Ovary (tissue), 10 donors: ENCODE measurements at regions of chr15 and their contacts with region 1.

Region 1: GRCh38 chr15:75229191-75230015 is 27.7 kb downstream of the C15orf39 start:
- DNase-seq: peak in 1 of 5 donors; percentile 29
- H3K4me3 ChIP-seq: no peak overlapping the region
- H3K27ac ChIP-seq: no peak overlapping the region
- H3K4me1 ChIP-seq: no peaks in the 10 kb centered on the region
- H3K27me3 ChIP-seq: no peaks in the 10 kb centered on the region
- CTCF ChIP-seq: no peak
- EP300 ChIP-seq: no peak
- POLR2A ChIP-seq: no peak

Region 2: GRCh38 chr15:75036314-75036649 is 193.1 kb before region 1 on chr15:
- intact Hi-C with region 1: no loop called
- DNase-seq: no peak
- H3K4me3 ChIP-seq: no peak overlapping the region
- H3K27ac ChIP-seq: no peak overlapping the region
- H3K4me1 ChIP-seq: no peaks in the 10 kb centered on the region
- H3K27me3 ChIP-seq: no peaks in the 10 kb centered on the region
- CTCF ChIP-seq: no peak
- EP300 ChIP-seq: no peak
- POLR2A ChIP-seq: no peak

Region 3: DNA sequence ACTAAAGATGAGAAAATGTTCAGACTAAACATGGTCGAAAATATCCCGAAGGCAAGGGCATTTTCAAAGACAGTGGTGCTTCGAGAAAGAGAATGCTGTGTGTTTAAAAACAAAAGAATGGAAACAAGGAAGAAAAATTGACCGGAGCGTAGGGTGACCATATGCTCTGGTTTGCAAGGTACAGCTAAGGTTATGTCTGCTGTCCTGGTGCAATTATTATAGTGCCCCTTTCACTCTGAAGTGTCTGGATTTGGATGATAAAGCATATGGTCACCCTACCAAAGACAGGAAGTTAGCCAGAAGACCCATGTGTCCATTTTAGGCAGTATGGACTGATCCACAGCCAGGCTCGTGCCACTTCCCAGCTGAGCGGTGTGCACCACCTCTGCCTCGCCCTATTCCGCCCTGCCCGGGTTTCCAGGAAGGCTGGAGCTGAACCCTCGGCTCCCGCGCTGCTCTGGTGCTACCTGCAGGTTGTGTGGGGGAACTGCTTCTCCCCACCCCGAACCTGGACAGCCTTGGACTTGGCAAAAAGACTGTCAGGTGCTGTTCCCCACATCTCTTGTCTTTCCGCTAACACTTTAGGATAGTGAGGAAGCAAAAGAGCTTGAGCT is 78.5 kb after region 1 on chr15:
- intact Hi-C with region 1: loop called in 1 of 4 experiments (anchors 10 kb)
- DNase-seq: peak in 3 of 5 donors; percentile 26 to 64 (median 37)
- H3K4me3 ChIP-seq: no peak overlapping the region
- H3K27ac ChIP-seq: no peak overlapping the region
- H3K4me1 ChIP-seq: no peaks in the 10 kb centered on the region
- H3K27me3 ChIP-seq: no peaks in the 10 kb centered on the region
- CTCF ChIP-seq: no peak
- EP300 ChIP-seq: no peak
- POLR2A ChIP-seq: no peak

Region 4: GRCh38 chr15:75327005-75327404 is 97.6 kb after region 1 on chr15:
- intact Hi-C with region 1: loop called in 1 of 4 experiments (anchors 10 kb)
- DNase-seq: no peak
- H3K4me3 ChIP-seq: no peak overlapping the region
- H3K27ac ChIP-seq: no peak overlapping the region
- H3K4me1 ChIP-seq: no peaks in the 10 kb centered on the region
- H3K27me3 ChIP-seq: no peaks in the 10 kb centered on the region
- CTCF ChIP-seq: no peak
- EP300 ChIP-seq: no peak
- POLR2A ChIP-seq: no peak

Region 5: DNA sequence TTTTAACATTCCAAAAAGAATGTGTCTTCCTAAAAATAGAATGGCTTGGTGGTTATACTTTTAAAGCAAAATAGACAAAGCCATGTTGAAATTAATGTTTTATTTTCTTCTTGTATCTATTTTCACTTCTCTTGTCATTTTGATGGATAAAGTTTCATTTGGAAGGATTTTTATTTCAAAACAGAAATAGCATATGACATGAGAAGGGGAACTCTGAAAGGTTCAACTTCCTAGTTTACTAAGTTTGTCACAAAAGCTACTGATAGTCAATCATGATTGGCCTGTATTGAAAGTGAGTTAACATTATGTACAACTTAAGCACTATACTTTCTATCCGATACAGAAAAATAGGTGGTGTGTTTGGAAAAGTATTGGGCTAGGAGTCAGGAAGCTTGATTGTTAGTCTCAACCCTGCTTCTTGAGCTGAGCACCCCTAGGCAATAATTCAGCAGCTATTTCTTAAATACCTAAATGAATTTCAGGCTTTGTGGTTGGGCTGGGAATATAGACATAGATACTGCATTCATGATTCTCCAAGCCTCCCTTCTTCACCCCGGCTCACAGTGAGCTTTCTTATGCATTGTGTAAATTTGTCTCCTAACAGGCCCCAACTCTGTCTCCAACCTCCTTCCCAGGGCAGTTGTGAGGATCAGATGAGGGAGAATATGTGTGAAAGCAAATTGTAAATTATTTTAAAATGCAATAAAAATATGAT is 530.2 kb after region 1 on chr15:
- intact Hi-C with region 1: no loop called
- DNase-seq: no peak
- H3K4me3 ChIP-seq: no peak overlapping the region
- H3K27ac ChIP-seq: no peak overlapping the region
- H3K4me1 ChIP-seq: peaks cover 5% of the 10 kb centered on the region
- H3K27me3 ChIP-seq: no peaks in the 10 kb centered on the region
- CTCF ChIP-seq: no peak
- EP300 ChIP-seq: no peak
- POLR2A ChIP-seq: no peak